ENCODE measurements at regions of chr9 and their contacts with region 1.

Region 1: DNA sequence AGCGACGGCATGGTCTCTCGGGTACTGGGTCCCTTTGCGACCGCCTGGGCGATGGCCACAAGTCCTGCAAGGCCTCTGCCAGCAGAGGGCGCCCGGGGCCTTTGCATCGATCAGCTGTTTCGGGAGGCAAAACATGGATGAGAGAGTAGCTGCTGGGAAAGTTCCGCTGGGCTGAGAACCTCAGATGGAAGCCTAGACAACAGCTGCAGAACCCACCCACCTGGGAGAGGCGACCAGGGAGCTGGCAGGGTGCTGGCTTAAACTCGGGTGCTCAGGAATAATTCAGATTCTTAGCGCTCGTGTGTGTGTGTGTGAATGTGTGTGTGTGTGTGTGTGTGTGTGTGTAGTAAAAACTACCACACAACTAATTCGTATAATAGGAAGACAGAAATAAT is 50.0 kb downstream of the TRIM32 start:
- H3K4me3 ChIP-seq: no peak overlapping the region
- H3K27ac ChIP-seq: no peak overlapping the region
- H3K4me1 ChIP-seq: no peaks in the 10 kb centered on the region
- CTCF ChIP-seq: peak; percentile 76

Region 2: GRCh38 chr9:116724123-116724522 is 13.0 kb before region 1 on chr9:
- CTCF ChIA-PET with region 1: interaction called, 49 read pairs
- POLR2A ChIA-PET with region 1: no interaction called
- H3K4me3 ChIP-seq: no peak overlapping the region
- H3K27ac ChIP-seq: no peak overlapping the region
- H3K4me1 ChIP-seq: no peaks in the 10 kb centered on the region
- CTCF ChIP-seq: no peak

Region 3: DNA sequence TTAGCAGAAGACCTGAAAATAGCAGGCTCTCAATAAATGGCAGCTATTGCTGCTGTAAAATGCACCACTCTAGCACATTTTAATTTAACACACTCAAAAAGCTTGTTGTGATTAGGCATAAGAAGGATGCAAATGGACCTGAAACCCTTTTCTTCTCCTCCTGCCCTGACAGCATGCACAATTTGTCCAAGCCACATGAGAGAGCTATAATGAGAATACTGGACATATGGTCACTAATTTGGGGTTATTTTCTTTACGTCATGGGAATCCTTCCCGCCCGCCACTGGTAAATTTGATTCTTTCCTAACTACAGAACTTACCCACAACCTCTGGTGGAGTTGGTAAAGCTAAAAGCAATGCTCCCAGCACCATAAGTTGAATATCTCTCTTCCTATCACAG is 12.0 kb after region 1 on chr9:
- CTCF ChIA-PET with region 1: interaction called, 17 read pairs
- POLR2A ChIA-PET with region 1: no interaction called
- H3K4me3 ChIP-seq: no peak overlapping the region
- H3K27ac ChIP-seq: no peak overlapping the region
- H3K4me1 ChIP-seq: no peaks in the 10 kb centered on the region
- CTCF ChIP-seq: no peak

Region 4: GRCh38 chr9:117411548-117411947 is 674.4 kb after region 1 on chr9:
- CTCF ChIA-PET with region 1: interaction called, 14 read pairs
- POLR2A ChIA-PET with region 1: no interaction called
- H3K4me3 ChIP-seq: no peak overlapping the region
- H3K27ac ChIP-seq: no peak overlapping the region
- H3K4me1 ChIP-seq: no peaks in the 10 kb centered on the region
- CTCF ChIP-seq: no peak

Measured in HEK293 (cell line).